T-cell (primary cell): ENCODE measurements at regions of chr2 and their contacts with region 1.

Region 1: GRCh38 chr2:64554117-64554516 is 30.0 kb downstream of the AFTPH start:
- DNase-seq: no peak
- ATAC-seq: no peak
- H3K4me3 ChIP-seq: no peak overlapping the region
- H3K4me3 Mint-ChIP-seq: no peak overlapping the region
- H3K27ac ChIP-seq: no peak overlapping the region
- H3K27ac Mint-ChIP-seq: no peak overlapping the region
- H3K4me1 ChIP-seq: no peaks in the 10 kb centered on the region
- H3K4me1 Mint-ChIP-seq: peaks cover 5 to 14% (median 9%) of the 10 kb centered on the region in 3 donors
- H3K27me3 ChIP-seq: no peaks in the 10 kb centered on the region
- H3K27me3 Mint-ChIP-seq: no peaks in the 10 kb centered on the region

Region 2: GRCh38 chr2:64214281-64215115 is 339.6 kb before region 1 on chr2:
- CTCF ChIA-PET with region 1: no interaction called
- POLR2A ChIA-PET with region 1: no interaction called
- DNase-seq: peak in 24 of 35 experiments; percentile 7 to 72 (median 30)
- ATAC-seq: peak; percentile 76 to 91 (median 84)
- H3K4me3 ChIP-seq: peak overlapping the region in 1 of 2 donors; percentile 18
- H3K4me3 Mint-ChIP-seq: peak overlapping the region; percentile 58 to 71 (median 61)
- H3K27ac ChIP-seq: peak overlapping the region; percentile 79
- H3K27ac Mint-ChIP-seq: peak overlapping the region; percentile 88 to 90
- H3K4me1 ChIP-seq: peaks cover 21 to 35% of the 10 kb centered on the region in 2 experiments
- H3K4me1 Mint-ChIP-seq: peaks cover 47 to 64% (median 52%) of the 10 kb centered on the region in 3 donors
- H3K27me3 ChIP-seq: no peaks in the 10 kb centered on the region
- H3K27me3 Mint-ChIP-seq: no peaks in the 10 kb centered on the region

Region 3: GRCh38 chr2:64504774-64505720 is 49.1 kb before region 1 on chr2:
- CTCF ChIA-PET with region 1: no interaction called
- POLR2A ChIA-PET with region 1: interaction called in 1 of 2 experiments, 10 read pairs
- DNase-seq: no peak
- ATAC-seq: no peak
- H3K4me3 ChIP-seq: no peak overlapping the region
- H3K4me3 Mint-ChIP-seq: no peak overlapping the region
- H3K27ac ChIP-seq: no peak overlapping the region
- H3K27ac Mint-ChIP-seq: no peak overlapping the region
- H3K4me1 ChIP-seq: no peaks in the 10 kb centered on the region
- H3K4me1 Mint-ChIP-seq: no peaks in the 10 kb centered on the region
- H3K27me3 ChIP-seq: peaks cover 0 to 6% of the 10 kb centered on the region in 2 experiments
- H3K27me3 Mint-ChIP-seq: peaks cover 4 to 8% of the 10 kb centered on the region in 2 donors